ENCODE measurements at regions of chr12 and their contacts with region 1.

Region 1: GRCh38 chr12:12716793-12717585 is at the start of gene CDKN1B:
- DNase-seq: peak; percentile 92
- H3K4me3 Mint-ChIP-seq: peak within 1 kb of the TSS; percentile 97
- H3K27ac Mint-ChIP-seq: peak within 1 kb of the TSS; percentile 99
- H3K4me1 Mint-ChIP-seq: peaks cover 39% of the 10 kb centered on the region
- H3K27me3 Mint-ChIP-seq: no peaks in the 10 kb centered on the region
- total RNA-seq, gene CDKN1B: 164 to 166 TPM

Region 2: GRCh38 chr12:12442548-12443071 is 274.4 kb before region 1 on chr12:
- CTCF ChIA-PET with region 1: no interaction called
- POLR2A ChIA-PET with region 1: interaction called, 38 read pairs
- DNase-seq: no peak
- H3K4me3 Mint-ChIP-seq: peak overlapping the region; percentile 39
- H3K27ac Mint-ChIP-seq: peak overlapping the region; percentile 98
- H3K4me1 Mint-ChIP-seq: peaks cover 91% of the 10 kb centered on the region
- H3K27me3 Mint-ChIP-seq: no peaks in the 10 kb centered on the region

Region 3: GRCh38 chr12:12467688-12468261 is 249.2 kb before region 1 on chr12:
- CTCF ChIA-PET with region 1: no interaction called
- POLR2A ChIA-PET with region 1: interaction called, 580 read pairs
- DNase-seq: peak; percentile 77
- H3K4me3 Mint-ChIP-seq: peak overlapping the region; percentile 40
- H3K27ac Mint-ChIP-seq: peak overlapping the region; percentile 97
- H3K4me1 Mint-ChIP-seq: peaks cover 87% of the 10 kb centered on the region
- H3K27me3 Mint-ChIP-seq: no peaks in the 10 kb centered on the region

Region 4: GRCh38 chr12:12611512-12612306 is 105.3 kb before region 1 on chr12 and contains the start of gene CREBL2:
- CTCF ChIA-PET with region 1: no interaction called
- POLR2A ChIA-PET with region 1: interaction called, 32 read pairs
- DNase-seq: peak; percentile 86
- H3K4me3 Mint-ChIP-seq: peak within 1 kb of the TSS; percentile 89
- H3K27ac Mint-ChIP-seq: peak within 1 kb of the TSS; percentile 95
- H3K4me1 Mint-ChIP-seq: peaks cover 64% of the 10 kb centered on the region
- H3K27me3 Mint-ChIP-seq: no peaks in the 10 kb centered on the region
- total RNA-seq, gene CREBL2: 24.2 to 26.1 TPM

Region 5: GRCh38 chr12:12696562-12697383 is 20.2 kb before region 1 on chr12:
- CTCF ChIA-PET with region 1: interaction called, 61 read pairs
- POLR2A ChIA-PET with region 1: interaction called, 886 read pairs
- DNase-seq: peak; percentile 93
- H3K4me3 Mint-ChIP-seq: peak overlapping the region; percentile 83
- H3K27ac Mint-ChIP-seq: peak overlapping the region; percentile 100
- H3K4me1 Mint-ChIP-seq: peaks cover 63% of the 10 kb centered on the region
- H3K27me3 Mint-ChIP-seq: no peaks in the 10 kb centered on the region